GM12878 (cell line): ENCODE measurements at regions of chr11 and their contacts with region 1.

Region 1: DNA sequence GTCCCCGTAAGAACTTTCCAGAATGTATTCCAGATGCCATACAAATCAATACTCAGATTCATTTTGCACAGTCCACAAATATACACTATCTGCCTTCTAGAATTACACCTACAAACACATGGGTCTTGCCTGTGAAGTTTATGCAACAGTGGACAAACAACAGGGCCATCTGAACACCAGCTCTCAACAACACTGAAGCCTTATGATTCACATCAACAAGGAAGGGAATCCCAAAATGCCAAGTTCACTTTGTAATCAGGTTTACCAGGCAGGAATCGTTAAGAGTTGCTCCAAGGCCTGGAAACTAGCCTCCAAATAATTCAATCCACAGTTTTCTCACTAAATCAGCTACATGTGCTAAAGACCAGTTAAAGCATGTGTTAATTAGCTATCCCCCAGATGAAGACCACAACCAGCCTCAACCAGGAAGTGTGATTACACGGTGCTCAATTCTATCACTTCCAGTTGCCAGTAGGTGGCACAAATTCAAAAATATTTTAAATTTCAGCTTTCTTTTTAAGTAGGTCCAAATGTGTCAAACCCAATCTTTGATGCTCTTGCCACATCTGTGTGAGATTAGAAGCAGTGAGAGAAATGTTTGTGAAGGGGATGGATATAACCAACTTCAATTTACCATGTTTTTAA is 139.1 kb upstream of the BDNF start:
- DNase-seq: no peak
- ATAC-seq: peak; percentile 58
- H3K4me3 ChIP-seq: no peak overlapping the region
- H3K27ac ChIP-seq: no peak overlapping the region
- H3K4me1 ChIP-seq: no peaks in the 10 kb centered on the region
- H3K27me3 ChIP-seq: no peaks in the 10 kb centered on the region
- CTCF ChIP-seq: peak in 2 of 3 experiments; percentile 19 to 34; a peak in 3 of 6 replicates
- EP300 ChIP-seq: no peak
- POLR2A ChIP-seq: no peak
- RAD21 ChIP-seq: no peak

Region 2: GRCh38 chr11:27720277-27720830 is 119.0 kb before region 1 on chr11:
- CTCF ChIA-PET with region 1: no interaction called
- POLR2A ChIA-PET with region 1: no interaction called
- RAD21 ChIA-PET with region 1: no interaction called
- SMC1A ChIA-PET with region 1: no interaction called
- in situ Hi-C with region 1: no loop called
- intact Hi-C with region 1: loop called (anchors 5 kb)
- DNase-seq: no peak
- ATAC-seq: no peak
- H3K4me3 ChIP-seq: no peak overlapping the region
- H3K27ac ChIP-seq: no peak overlapping the region
- H3K4me1 ChIP-seq: no peaks in the 10 kb centered on the region
- H3K27me3 ChIP-seq: peaks cover 8 to 12% of the 10 kb centered on the region in 2 experiments
- CTCF ChIP-seq: no peak
- EP300 ChIP-seq: no peak
- POLR2A ChIP-seq: no peak
- RAD21 ChIP-seq: no peak

Region 3: DNA sequence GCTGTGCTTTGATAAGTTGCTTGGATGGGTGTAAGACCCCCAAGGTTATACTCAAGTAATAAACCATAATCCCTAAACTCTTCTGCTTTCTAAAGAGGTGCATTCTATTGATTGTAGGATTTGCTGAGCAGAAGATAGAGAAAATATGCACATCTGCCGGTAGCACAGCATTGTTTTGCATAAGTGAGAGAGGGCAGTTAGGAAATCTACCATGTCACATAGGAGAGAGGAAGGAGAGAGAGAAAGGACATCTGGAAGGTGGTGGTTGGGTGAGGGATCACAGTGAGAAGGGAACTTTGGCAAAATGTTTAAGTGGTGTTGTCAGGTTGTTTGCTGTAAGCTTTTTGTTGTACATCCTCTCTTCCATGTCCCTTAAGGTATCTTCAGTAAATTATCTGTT is 65.5 kb before region 1 on chr11:
- CTCF ChIA-PET with region 1: no interaction called
- POLR2A ChIA-PET with region 1: no interaction called
- RAD21 ChIA-PET with region 1: no interaction called
- SMC1A ChIA-PET with region 1: no interaction called
- in situ Hi-C with region 1: no loop called
- intact Hi-C with region 1: no loop called
- DNase-seq: no peak
- ATAC-seq: no peak
- H3K4me3 ChIP-seq: no peak overlapping the region
- H3K27ac ChIP-seq: no peak overlapping the region
- H3K4me1 ChIP-seq: no peaks in the 10 kb centered on the region
- H3K27me3 ChIP-seq: no peaks in the 10 kb centered on the region
- CTCF ChIP-seq: no peak
- EP300 ChIP-seq: no peak
- POLR2A ChIP-seq: no peak
- RAD21 ChIP-seq: no peak

Region 4: DNA sequence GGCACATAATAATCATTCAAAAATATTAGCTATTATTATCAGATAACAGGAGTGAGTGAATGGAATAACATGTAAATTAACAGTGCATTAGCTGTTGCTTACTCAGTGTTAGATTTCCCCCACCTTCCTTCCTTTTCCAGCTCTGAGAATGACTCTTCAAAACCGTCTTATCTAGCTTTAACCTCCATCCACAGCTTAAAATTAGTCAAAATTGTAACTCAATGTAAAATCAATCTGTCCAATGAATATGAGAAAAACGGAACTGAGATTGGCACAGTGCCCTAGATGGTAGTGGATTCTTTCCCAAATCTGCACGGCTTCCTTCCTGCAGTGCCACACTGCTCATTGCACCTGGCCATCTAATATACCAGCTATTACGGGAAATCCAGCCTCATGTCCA is 17.7 kb after region 1 on chr11:
- CTCF ChIA-PET with region 1: interaction called, 13 read pairs
- POLR2A ChIA-PET with region 1: no interaction called
- RAD21 ChIA-PET with region 1: interaction called, 7 read pairs
- SMC1A ChIA-PET with region 1: interaction called, 7 read pairs
- in situ Hi-C with region 1: no loop called
- intact Hi-C with region 1: no loop called
- DNase-seq: no peak
- ATAC-seq: peak; percentile 88
- H3K4me3 ChIP-seq: no peak overlapping the region
- H3K27ac ChIP-seq: no peak overlapping the region
- H3K4me1 ChIP-seq: no peaks in the 10 kb centered on the region
- H3K27me3 ChIP-seq: no peaks in the 10 kb centered on the region
- CTCF ChIP-seq: no peak
- EP300 ChIP-seq: peak in 1 of 2 experiments; percentile 56; a peak in 1 of 4 replicates
- POLR2A ChIP-seq: no peak
- RAD21 ChIP-seq: no peak

Region 5: DNA sequence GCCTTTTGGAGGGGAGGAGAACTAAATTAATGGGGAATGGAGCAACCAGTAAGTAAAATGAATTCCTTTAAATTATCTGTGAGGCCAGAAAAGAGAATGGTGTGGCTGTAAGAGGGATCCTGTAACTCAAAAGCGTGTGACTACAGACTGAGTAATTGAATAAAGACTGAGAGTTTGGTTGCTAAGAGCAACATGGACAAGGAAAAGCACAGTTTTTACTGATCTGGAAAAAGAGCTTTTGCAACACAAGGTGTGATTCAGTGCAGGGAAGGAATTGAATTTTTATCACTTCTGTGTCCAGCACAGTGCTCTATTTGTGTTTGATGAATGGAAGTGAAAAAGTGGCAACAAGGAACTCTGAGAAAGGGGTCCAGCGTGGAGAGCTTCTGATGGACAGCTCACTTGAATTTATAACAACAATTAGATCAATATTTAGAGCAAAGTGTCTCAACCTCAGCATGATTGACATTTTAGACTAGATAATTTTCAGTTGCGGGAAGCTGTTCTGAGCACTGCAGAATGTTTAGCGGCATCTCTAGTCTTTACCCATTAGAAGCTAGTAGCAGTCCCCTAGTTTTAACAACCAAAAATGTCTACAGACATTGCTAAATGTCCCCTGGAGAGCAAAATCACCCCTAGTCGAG is 63.8 kb after region 1 on chr11:
- CTCF ChIA-PET with region 1: no interaction called
- POLR2A ChIA-PET with region 1: no interaction called
- RAD21 ChIA-PET with region 1: no interaction called
- SMC1A ChIA-PET with region 1: no interaction called
- in situ Hi-C with region 1: no loop called
- intact Hi-C with region 1: no loop called
- DNase-seq: no peak
- ATAC-seq: no peak
- H3K4me3 ChIP-seq: no peak overlapping the region
- H3K27ac ChIP-seq: no peak overlapping the region
- H3K4me1 ChIP-seq: no peaks in the 10 kb centered on the region
- H3K27me3 ChIP-seq: no peaks in the 10 kb centered on the region; a peak in 1 of 4 replicates
- CTCF ChIP-seq: no peak
- EP300 ChIP-seq: no peak
- POLR2A ChIP-seq: no peak
- RAD21 ChIP-seq: no peak

Region 6: DNA sequence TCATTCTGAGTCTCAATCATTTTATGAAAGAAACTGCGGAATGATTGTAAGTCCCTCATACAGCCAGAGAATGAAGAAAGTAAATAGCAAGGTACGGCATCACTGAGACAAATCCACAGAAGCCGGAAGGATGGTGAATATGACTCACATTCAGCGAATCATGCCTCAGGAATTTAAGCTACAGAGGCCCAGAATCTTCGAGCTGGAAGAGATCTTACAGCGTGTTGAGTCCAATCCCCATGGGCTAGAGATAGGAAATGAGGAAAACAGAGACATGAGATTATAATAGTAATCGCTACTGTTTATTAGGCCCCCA is 95.4 kb after region 1 on chr11:
- CTCF ChIA-PET with region 1: no interaction called
- POLR2A ChIA-PET with region 1: no interaction called
- RAD21 ChIA-PET with region 1: no interaction called
- SMC1A ChIA-PET with region 1: no interaction called
- in situ Hi-C with region 1: no loop called
- intact Hi-C with region 1: no loop called
- DNase-seq: no peak
- ATAC-seq: no peak
- H3K4me3 ChIP-seq: no peak overlapping the region
- H3K27ac ChIP-seq: no peak overlapping the region
- H3K4me1 ChIP-seq: no peaks in the 10 kb centered on the region
- H3K27me3 ChIP-seq: no peaks in the 10 kb centered on the region
- CTCF ChIP-seq: no peak
- EP300 ChIP-seq: no peak
- POLR2A ChIP-seq: no peak
- RAD21 ChIP-seq: no peak